A549 (cell line): ENCODE measurements at regions of chr1 and their contacts with region 1.

Region 1: DNA sequence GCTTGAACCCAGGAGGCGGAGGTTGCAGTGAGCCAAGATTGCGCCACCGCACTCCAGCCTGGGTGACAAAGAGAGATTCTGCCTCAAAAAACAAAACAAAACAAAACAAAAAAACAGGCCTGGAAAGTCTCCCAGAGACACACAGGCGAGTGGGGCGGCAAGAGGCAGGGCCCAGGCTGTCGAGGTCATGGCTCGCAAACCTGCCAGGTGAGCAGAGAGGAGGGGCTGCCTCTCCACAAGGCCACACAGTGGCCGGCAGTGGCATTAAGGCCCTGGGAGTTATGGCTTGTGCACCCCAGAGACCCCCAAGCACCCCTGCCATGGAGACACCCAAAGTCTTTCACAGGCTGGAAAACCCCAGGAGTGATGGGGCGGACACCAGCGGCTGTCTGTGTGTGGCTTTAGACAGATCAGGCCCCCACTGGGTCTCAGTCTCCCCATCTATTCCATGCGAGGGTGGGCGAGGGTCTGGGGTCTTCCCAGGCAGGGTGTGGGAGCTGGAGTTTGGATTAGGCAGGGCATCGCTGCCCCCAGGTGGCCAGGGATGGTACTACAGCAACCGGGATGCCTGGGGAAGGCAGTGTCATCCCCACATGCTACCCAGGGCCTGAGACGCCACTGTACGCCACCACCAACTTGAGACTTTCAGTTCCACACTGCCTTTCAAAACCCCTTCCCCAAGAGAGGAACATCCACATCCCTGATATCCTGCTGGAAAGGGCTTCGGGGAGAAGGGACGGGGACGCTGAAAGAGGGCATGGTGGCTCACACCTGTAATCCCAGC is 7.3 kb upstream of the CTRC start:
- DNase-seq: peak in 1 of 2 experiments; percentile 60
- ATAC-seq: peak in 1 of 2 experiments; percentile 16; a peak in 3 of 6 replicates
- H3K4me3 ChIP-seq: no peak overlapping the region
- H3K27ac ChIP-seq: peak overlapping the region; percentile 97 to 98
- H3K4me1 ChIP-seq: peaks cover 69% of the 10 kb centered on the region
- CTCF ChIP-seq: peak; percentile 72
- EP300 ChIP-seq: no peak
- POLR2A ChIP-seq: no peak
- RAD21 ChIP-seq: peak; percentile 78 to 89

Region 2: DNA sequence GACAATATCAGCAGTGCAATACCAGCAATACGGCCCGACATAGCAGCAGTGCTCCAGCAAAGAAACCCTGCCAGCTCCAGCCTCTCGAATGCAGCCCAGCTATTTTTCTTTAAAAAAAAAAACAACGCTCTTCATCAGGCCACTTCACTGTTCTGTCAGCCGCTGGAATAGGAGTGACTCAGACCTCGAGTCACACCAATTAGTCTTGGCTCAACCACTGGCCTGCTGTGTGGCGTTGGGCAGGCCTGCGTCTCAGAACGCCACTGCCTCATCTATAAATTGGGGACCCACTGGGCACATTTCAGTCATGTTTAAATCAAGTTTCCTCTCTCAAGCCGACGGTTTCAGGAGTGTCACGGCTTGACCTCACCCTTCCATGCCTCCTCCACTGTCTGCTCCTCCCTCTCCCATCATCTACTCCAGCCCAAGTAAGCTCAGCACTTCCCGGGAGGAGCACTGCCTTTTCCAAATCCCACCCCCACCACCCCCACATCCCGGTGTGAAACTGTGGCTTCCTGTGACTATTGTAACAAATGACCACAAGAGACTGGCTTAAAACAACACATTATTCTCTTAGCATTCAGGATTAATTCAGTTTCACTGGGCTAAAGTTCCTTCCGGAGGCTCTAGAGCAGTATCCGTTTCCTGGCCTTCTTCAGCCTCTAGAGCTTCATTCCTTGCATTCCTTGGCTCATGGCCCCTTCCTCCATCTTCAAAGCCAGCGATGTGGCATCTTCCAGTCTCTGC is 93.2 kb before region 1 on chr1:
- CTCF ChIA-PET with region 1: interaction called, 21 read pairs
- POLR2A ChIA-PET with region 1: no interaction called
- DNase-seq: no peak
- ATAC-seq: peak; percentile 59 to 65; a peak in 4 of 6 replicates
- H3K4me3 ChIP-seq: no peak overlapping the region
- H3K27ac ChIP-seq: peak overlapping the region; percentile 28 to 77; a peak in 4 of 6 replicates
- H3K4me1 ChIP-seq: peaks cover 31% of the 10 kb centered on the region
- CTCF ChIP-seq: no peak
- EP300 ChIP-seq: no peak
- POLR2A ChIP-seq: no peak
- RAD21 ChIP-seq: no peak

Region 3: DNA sequence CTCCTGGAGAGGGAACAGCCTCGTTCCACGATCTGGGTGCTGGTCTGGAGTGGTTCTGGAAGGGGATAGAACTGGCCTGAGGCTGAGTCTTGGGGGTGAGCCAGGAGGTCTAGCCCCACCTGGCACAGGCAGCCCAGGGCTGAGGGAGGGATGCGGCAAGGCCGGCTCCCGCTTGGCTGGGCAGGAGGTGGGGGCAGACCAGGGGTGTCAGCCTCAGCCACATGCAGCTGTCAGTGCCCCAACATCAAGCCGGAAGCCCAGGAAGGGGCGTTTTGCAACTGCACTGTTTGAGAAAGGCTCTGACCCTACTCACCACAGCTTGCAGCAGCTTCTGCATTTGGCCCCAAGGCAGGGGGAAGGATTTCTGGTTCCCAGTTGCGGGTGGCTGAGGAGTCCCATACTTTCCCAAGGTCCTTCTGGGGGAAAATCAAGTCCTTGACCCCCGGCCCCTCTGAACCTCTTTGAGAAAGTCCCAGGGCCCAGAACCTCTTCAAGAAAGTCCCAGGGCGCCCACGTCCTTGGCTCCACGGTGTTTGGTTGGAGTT is 19.3 kb before region 1 on chr1:
- CTCF ChIA-PET with region 1: interaction called, 17 read pairs
- POLR2A ChIA-PET with region 1: interaction called, 7 read pairs
- DNase-seq: no peak
- ATAC-seq: peak in 1 of 2 experiments; percentile 7; a peak in 3 of 6 replicates
- H3K4me3 ChIP-seq: peak overlapping the region; percentile 97
- H3K27ac ChIP-seq: peak overlapping the region; percentile 95 to 97
- H3K4me1 ChIP-seq: peaks cover 75% of the 10 kb centered on the region
- CTCF ChIP-seq: no peak
- EP300 ChIP-seq: no peak
- POLR2A ChIP-seq: no peak
- RAD21 ChIP-seq: no peak

Region 4: GRCh38 chr1:15417365-15417934 is 13.5 kb before region 1 on chr1:
- CTCF ChIA-PET with region 1: interaction called, 32 read pairs
- POLR2A ChIA-PET with region 1: no interaction called
- DNase-seq: peak; percentile 56 to 72
- ATAC-seq: peak; percentile 72 to 76
- H3K4me3 ChIP-seq: 0 out of 3 replicates have a peak overlapping the region, but pooled peaks have one; percentile 2
- H3K27ac ChIP-seq: peak overlapping the region; percentile 73 to 97
- H3K4me1 ChIP-seq: peaks cover 69% of the 10 kb centered on the region
- CTCF ChIP-seq: no peak
- EP300 ChIP-seq: 0 out of 5 replicates have a peak, but pooled peaks of 1 of the 2 experiments have one; percentile 24
- POLR2A ChIP-seq: no peak
- RAD21 ChIP-seq: no peak

Region 5: DNA sequence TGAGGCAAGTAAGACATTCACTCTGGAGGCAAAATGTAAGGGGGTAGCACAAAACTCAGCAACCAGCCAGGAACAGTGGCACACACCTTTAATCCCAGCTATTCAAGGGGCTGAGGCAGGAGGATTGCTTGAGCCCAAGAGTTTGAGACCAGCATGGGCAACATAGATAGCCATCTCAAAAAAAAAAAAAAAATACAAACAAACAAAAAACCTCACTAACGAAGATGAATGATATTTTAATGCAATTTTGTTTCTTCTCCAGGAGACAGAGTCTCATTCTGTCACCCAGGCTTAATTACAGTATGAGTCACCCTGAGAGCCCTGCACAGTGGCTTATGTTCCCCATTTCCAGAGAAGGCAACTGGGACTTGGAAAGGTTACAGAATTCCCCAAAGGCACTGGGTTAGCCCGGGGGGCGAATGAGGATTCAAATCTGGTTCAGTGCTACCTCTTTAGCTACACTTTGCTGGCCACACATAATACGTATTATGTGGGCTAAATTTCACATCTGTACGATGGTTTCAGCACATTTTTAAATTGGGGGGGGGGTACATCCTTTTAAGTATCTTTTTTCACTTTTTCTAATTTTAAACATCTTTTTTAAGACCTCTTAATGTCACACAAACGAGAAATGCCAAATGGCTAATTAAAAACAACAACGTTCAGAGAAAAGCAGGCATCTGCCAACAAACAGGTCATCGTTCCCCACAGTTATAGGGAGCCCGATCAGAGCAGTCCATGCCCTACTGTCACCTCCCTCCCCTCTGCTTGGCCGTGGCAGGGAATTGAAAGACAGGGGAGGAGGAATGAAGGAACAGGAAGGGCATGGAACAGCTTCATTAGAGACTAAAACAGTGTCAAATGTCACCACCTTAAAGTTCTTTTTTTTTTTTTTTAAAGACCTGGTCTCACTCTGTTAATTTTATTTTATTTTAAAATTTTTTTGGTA is 29.1 kb after region 1 on chr1:
- CTCF ChIA-PET with region 1: no interaction called
- POLR2A ChIA-PET with region 1: no interaction called
- DNase-seq: no peak
- ATAC-seq: no peak
- H3K4me3 ChIP-seq: no peak overlapping the region
- H3K27ac ChIP-seq: no peak overlapping the region
- H3K4me1 ChIP-seq: no peaks in the 10 kb centered on the region
- CTCF ChIP-seq: no peak
- EP300 ChIP-seq: no peak
- POLR2A ChIP-seq: no peak
- RAD21 ChIP-seq: no peak

Region 6: DNA sequence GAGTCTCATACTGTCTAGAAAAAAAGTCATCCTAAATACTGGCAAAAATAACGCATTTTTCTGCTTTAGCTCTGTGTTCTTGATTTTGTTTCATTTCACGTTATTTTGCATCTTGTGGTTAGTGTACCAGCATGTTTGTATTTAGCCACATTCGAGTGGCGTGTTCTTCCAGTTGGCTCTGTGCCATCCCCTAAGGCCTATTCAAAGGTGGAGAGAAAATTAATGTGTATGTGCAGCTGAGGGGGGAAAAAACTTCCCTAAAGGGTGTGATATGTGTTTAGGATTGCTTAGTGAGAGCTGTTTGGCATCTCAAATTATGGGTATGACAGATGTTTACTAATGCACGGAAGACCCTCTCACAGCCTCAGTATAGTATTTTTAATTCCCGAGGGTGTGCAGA is 107.8 kb after region 1 on chr1:
- CTCF ChIA-PET with region 1: no interaction called
- POLR2A ChIA-PET with region 1: no interaction called
- DNase-seq: no peak
- ATAC-seq: no peak
- H3K4me3 ChIP-seq: no peak overlapping the region
- H3K27ac ChIP-seq: no peak overlapping the region
- H3K4me1 ChIP-seq: no peaks in the 10 kb centered on the region
- CTCF ChIP-seq: no peak
- EP300 ChIP-seq: no peak
- POLR2A ChIP-seq: no peak
- RAD21 ChIP-seq: no peak

Region 7: DNA sequence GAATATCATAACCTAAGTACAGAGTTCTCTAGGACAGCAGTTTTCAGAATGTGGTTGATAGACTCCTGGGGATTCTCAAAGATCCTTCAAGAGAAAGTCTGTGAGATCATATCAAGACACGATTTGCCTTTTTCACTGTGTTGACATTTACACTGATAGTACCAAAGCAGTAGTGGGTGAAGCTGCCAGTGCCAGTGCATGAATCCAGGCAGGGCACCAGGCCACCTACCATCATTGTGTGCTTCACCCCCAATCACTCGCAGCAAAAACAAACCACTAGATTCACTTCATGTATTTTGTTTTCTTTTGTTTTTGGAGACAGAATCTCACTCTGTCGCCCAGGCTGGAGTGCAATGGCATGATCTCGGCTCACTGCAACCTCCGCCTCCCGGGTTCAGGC is 119.6 kb after region 1 on chr1:
- CTCF ChIA-PET with region 1: no interaction called
- POLR2A ChIA-PET with region 1: no interaction called
- DNase-seq: no peak
- ATAC-seq: no peak
- H3K4me3 ChIP-seq: no peak overlapping the region
- H3K27ac ChIP-seq: no peak overlapping the region
- H3K4me1 ChIP-seq: no peaks in the 10 kb centered on the region
- CTCF ChIP-seq: no peak
- EP300 ChIP-seq: no peak
- POLR2A ChIP-seq: no peak
- RAD21 ChIP-seq: no peak

Region 8: GRCh38 chr1:15633756-15634420 is 202.9 kb after region 1 on chr1:
- CTCF ChIA-PET with region 1: no interaction called
- POLR2A ChIA-PET with region 1: no interaction called
- DNase-seq: no peak
- ATAC-seq: no peak
- H3K4me3 ChIP-seq: no peak overlapping the region
- H3K27ac ChIP-seq: no peak overlapping the region
- H3K4me1 ChIP-seq: no peaks in the 10 kb centered on the region
- CTCF ChIP-seq: no peak
- EP300 ChIP-seq: no peak
- POLR2A ChIP-seq: no peak
- RAD21 ChIP-seq: no peak